Mammary epithelial cell (primary cell): ENCODE measurements at regions of chr11 and their contacts with region 1.

Region 1: GRCh38 chr11:76680518-76681425 is 10.2 kb upstream of the LRRC32 start:
- DNase-seq: peak; percentile 25
- H3K4me3 ChIP-seq: no peak overlapping the region
- H3K27ac ChIP-seq: no peak overlapping the region
- H3K4me1 ChIP-seq: no peaks in the 10 kb centered on the region
- H3K27me3 ChIP-seq: no peaks in the 10 kb centered on the region
- CTCF ChIP-seq: peak; percentile 58 to 89

Region 2: DNA sequence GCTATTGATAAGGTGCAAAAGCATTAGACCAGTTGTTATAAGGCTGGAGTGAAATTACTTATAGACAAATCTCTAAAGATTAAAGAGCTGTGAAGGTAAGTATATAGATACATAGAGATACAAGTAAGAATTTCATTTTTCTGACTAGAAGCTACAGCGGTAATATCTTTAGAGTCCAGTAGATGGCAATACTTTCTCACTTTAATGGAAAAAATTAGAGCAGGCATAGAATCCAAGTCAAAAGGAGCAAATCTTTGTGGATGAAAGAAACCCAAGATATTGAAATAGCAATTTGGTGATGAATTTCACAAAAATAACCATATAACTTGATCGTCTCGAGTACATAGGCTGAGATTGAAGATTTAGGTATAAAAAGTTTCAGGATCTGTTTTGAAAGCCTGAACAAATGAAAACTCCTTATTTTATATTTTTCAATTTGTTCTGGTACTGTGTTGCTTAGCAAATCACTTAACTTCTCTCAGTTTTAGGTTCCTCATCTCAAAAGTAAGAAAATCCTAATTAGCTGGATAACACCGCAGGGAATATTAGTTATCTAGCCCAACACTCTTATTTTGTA is 783.8 kb before region 1 on chr11:
- CTCF ChIA-PET with region 1: no interaction called
- dilution Hi-C with region 1: no loop called
- in situ Hi-C with region 1: no loop called
- intact Hi-C with region 1: loop called (anchors 10 kb)
- DNase-seq: peak; percentile 35
- H3K4me3 ChIP-seq: no peak overlapping the region
- H3K27ac ChIP-seq: no peak overlapping the region
- H3K4me1 ChIP-seq: no peaks in the 10 kb centered on the region
- H3K27me3 ChIP-seq: no peaks in the 10 kb centered on the region
- CTCF ChIP-seq: peak; percentile 59 to 60

Region 3: GRCh38 chr11:76207642-76208401 is 472.9 kb before region 1 on chr11:
- CTCF ChIA-PET with region 1: no interaction called
- dilution Hi-C with region 1: no loop called
- in situ Hi-C with region 1: loop called in 1 of 2 experiments (anchors 10 kb)
- intact Hi-C with region 1: loop called (anchors 1 kb)
- DNase-seq: peak; percentile 68
- H3K4me3 ChIP-seq: peak overlapping the region; percentile 30 to 48 (median 35)
- H3K27ac ChIP-seq: no peak overlapping the region
- H3K4me1 ChIP-seq: peaks cover 40% of the 10 kb centered on the region
- H3K27me3 ChIP-seq: peaks cover 37% of the 10 kb centered on the region
- CTCF ChIP-seq: peak; percentile 83 to 95

Region 4: GRCh38 chr11:76551400-76551799 is 129.4 kb before region 1 on chr11:
- CTCF ChIA-PET with region 1: no interaction called
- dilution Hi-C with region 1: no loop called
- in situ Hi-C with region 1: no loop called
- intact Hi-C with region 1: loop called (anchors 1 kb)
- DNase-seq: no peak
- H3K4me3 ChIP-seq: no peak overlapping the region
- H3K27ac ChIP-seq: no peak overlapping the region
- H3K4me1 ChIP-seq: no peaks in the 10 kb centered on the region
- H3K27me3 ChIP-seq: no peaks in the 10 kb centered on the region
- CTCF ChIP-seq: peak in 1 of 2 donors; percentile 27

Region 5: GRCh38 chr11:76598426-76598839 is 82.3 kb before region 1 on chr11:
- CTCF ChIA-PET with region 1: interaction called, 3 read pairs
- dilution Hi-C with region 1: loop called (anchors 5 kb)
- in situ Hi-C with region 1: no loop called
- intact Hi-C with region 1: loop called (anchors 1 kb)
- DNase-seq: no peak
- H3K4me3 ChIP-seq: no peak overlapping the region
- H3K27ac ChIP-seq: no peak overlapping the region
- H3K4me1 ChIP-seq: no peaks in the 10 kb centered on the region
- H3K27me3 ChIP-seq: no peaks in the 10 kb centered on the region
- CTCF ChIP-seq: peak in 1 of 2 donors; percentile 15

Region 6: GRCh38 chr11:76997512-76997911 is 316.7 kb after region 1 on chr11:
- CTCF ChIA-PET with region 1: no interaction called
- dilution Hi-C with region 1: no loop called
- in situ Hi-C with region 1: no loop called
- intact Hi-C with region 1: no loop called
- DNase-seq: no peak
- H3K4me3 ChIP-seq: no peak overlapping the region
- H3K27ac ChIP-seq: no peak overlapping the region
- H3K4me1 ChIP-seq: no peaks in the 10 kb centered on the region
- H3K27me3 ChIP-seq: no peaks in the 10 kb centered on the region
- CTCF ChIP-seq: no peak